Esophagus muscularis mucosa (tissue), 4 donors: ENCODE measurements at regions of chr4 and their contacts with region 1.

Region 1: GRCh38 chr4:6783053-6783981 is 790 bp downstream of the KIAA0232 start:
- DNase-seq: peak; percentile 95
- H3K4me3 ChIP-seq: peak overlapping the region; percentile 96 to 100 (median 98)
- H3K27ac ChIP-seq: peak overlapping the region; percentile 100
- H3K4me1 ChIP-seq: peaks cover 34 to 56% (median 55%) of the 10 kb centered on the region in 4 donors
- H3K27me3 ChIP-seq: peaks cover 0 to 5% (median 0%) of the 10 kb centered on the region in 4 donors
- CTCF ChIP-seq: peak in 1 of 3 experiments; percentile 19
- EP300 ChIP-seq: no peak
- POLR2A ChIP-seq: peak; percentile 38

Region 2: GRCh38 chr4:6709230-6710114 is 73.8 kb before region 1 on chr4 and contains the start of gene MRFAP1L1:
- intact Hi-C with region 1: no loop called
- DNase-seq: peak; percentile 98
- H3K4me3 ChIP-seq: peak within 1 kb of the TSS; percentile 69 to 79 (median 73)
- H3K27ac ChIP-seq: peak within 1 kb of the TSS; percentile 76 to 89 (median 84)
- H3K4me1 ChIP-seq: peaks cover 35 to 52% (median 52%) of the 10 kb centered on the region in 4 donors
- H3K27me3 ChIP-seq: no peaks in the 10 kb centered on the region
- CTCF ChIP-seq: peak in 2 of 3 experiments; percentile 22 to 30
- EP300 ChIP-seq: no peak
- POLR2A ChIP-seq: no peak
- total RNA-seq, gene MRFAP1L1: 55.2 to 60.0 (median 57.0) TPM

Region 3: GRCh38 chr4:6873792-6874461 is 90.6 kb after region 1 on chr4:
- intact Hi-C with region 1: loop called (anchors 5 kb)
- DNase-seq: no peak
- H3K4me3 ChIP-seq: no peak overlapping the region
- H3K27ac ChIP-seq: no peak overlapping the region
- H3K4me1 ChIP-seq: peaks cover 14 to 39% (median 29%) of the 10 kb centered on the region in 4 donors
- H3K27me3 ChIP-seq: no peaks in the 10 kb centered on the region
- CTCF ChIP-seq: peak; percentile 74 to 86 (median 82)
- EP300 ChIP-seq: no peak
- POLR2A ChIP-seq: no peak

Region 4: GRCh38 chr4:7042697-7043464 is 259.6 kb after region 1 on chr4 and contains the start of gene TADA2B:
- intact Hi-C with region 1: loop called (anchors 10 kb)
- DNase-seq: peak; percentile 99
- H3K4me3 ChIP-seq: peak within 1 kb of the TSS; percentile 95 to 100 (median 98)
- H3K27ac ChIP-seq: peak within 1 kb of the TSS; percentile 90 to 94 (median 92)
- H3K4me1 ChIP-seq: peaks cover 41 to 55% (median 50%) of the 10 kb centered on the region in 4 donors
- H3K27me3 ChIP-seq: no peaks in the 10 kb centered on the region
- CTCF ChIP-seq: peak; percentile 37 to 72 (median 50)
- EP300 ChIP-seq: no peak
- POLR2A ChIP-seq: no peak
- total RNA-seq, gene TADA2B: 19.9 to 31.7 (median 26.3) TPM